Mammary epithelial cell (primary cell): ENCODE measurements at regions of chr22 and their contacts with region 1.

Region 1: GRCh38 chr22:39532215-39533071 is at the start of gene RPS19BP1:
- DNase-seq: peak; percentile 100
- H3K4me3 ChIP-seq: peak within 1 kb of the TSS; percentile 65 to 85 (median 80)
- H3K27ac ChIP-seq: peak within 1 kb of the TSS; percentile 52
- H3K4me1 ChIP-seq: peaks cover 41% of the 10 kb centered on the region
- H3K27me3 ChIP-seq: no peaks in the 10 kb centered on the region
- CTCF ChIP-seq: no peak
- total RNA-seq, gene RPS19BP1: 35.7 to 81.3 TPM

Region 2: DNA sequence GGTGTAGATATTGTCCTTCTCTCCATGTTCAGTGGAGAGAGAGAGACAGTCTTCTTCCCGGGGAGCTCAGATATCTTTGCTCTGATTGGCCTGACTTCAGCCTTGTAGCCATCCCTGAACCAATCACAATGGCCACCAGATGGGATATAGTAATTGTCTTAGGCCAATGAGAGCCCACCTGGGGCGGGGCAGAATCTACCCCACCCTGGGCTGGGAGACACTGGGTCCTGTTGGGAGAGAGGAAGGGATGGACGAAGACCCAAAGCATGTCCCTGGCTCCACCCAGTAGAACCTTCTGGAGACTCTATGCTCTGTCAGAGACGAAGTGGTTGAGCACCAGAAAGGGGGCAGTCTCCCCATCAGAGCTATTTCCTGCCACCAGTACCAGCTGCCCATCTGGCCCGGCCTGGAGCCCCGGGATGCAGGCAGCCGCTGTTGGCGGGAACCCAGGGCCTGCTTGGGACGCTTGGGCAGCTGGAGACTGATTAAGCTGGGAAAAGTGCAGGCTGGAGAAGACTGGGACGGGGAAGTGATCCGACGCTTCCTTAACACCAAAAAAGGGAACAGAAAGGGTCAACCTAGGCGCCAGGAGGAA is 348.4 kb before region 1 on chr22:
- CTCF ChIA-PET with region 1: interaction called, 15 read pairs
- dilution Hi-C with region 1: no loop called
- in situ Hi-C with region 1: no loop called
- intact Hi-C with region 1: no loop called
- DNase-seq: no peak
- H3K4me3 ChIP-seq: no peak overlapping the region
- H3K27ac ChIP-seq: no peak overlapping the region
- H3K4me1 ChIP-seq: peaks cover 9% of the 10 kb centered on the region
- H3K27me3 ChIP-seq: no peaks in the 10 kb centered on the region
- CTCF ChIP-seq: no peak

Region 3: GRCh38 chr22:39414886-39415285 is 117.6 kb before region 1 on chr22:
- CTCF ChIA-PET with region 1: no interaction called
- dilution Hi-C with region 1: no loop called
- in situ Hi-C with region 1: no loop called
- intact Hi-C with region 1: no loop called
- DNase-seq: no peak
- H3K4me3 ChIP-seq: no peak overlapping the region
- H3K27ac ChIP-seq: no peak overlapping the region
- H3K4me1 ChIP-seq: no peaks in the 10 kb centered on the region
- H3K27me3 ChIP-seq: no peaks in the 10 kb centered on the region
- CTCF ChIP-seq: no peak

Region 4: GRCh38 chr22:39808081-39808480 is 275.6 kb after region 1 on chr22:
- CTCF ChIA-PET with region 1: no interaction called
- dilution Hi-C with region 1: no loop called
- in situ Hi-C with region 1: no loop called
- intact Hi-C with region 1: loop called (anchors 1 kb)
- DNase-seq: no peak
- H3K4me3 ChIP-seq: no peak overlapping the region
- H3K27ac ChIP-seq: no peak overlapping the region
- H3K4me1 ChIP-seq: no peaks in the 10 kb centered on the region
- H3K27me3 ChIP-seq: no peaks in the 10 kb centered on the region
- CTCF ChIP-seq: peak; percentile 41 to 51

Region 5: DNA sequence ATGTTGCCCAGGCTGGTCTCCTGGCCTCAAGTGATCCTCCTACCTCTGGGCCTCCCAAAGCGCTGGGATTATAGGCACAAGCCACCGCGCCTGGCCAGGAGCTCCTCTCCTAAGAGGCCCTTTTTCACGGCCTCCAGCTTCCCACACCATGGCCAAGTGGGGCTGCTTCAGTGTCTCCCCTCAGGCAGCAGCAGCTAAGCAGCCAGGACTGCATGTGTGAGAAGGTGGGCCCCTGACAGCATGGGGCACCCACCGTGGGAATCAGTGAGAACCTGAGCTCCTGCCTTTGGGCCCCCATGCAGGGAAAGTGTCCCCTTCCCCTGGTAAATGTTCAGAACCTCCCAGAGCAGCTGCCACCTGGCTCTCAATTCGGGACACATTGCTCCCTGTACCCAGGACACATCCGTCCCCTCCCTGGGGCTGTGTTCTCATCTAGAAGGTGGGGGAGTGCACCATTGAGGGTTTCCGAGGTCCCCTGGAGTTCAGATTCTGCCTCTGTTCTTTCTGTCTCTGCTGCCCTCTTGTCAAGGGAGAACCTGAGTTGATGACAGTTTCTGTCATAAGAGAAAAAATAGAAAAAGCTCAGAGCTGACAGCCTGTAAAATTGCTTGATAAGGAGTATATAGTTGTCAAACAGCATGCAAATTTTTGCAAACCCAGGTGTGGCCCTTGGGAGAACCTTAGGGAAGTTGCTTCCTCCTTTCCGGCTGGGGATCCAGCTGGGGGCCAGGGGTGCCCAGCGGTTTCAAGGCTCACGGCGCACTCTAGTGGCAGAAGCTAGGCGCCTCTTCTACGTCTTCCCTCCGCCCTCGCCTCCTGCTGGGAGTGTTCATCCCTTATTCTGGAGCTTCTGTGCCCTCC is 492.0 kb after region 1 on chr22:
- CTCF ChIA-PET with region 1: no interaction called
- dilution Hi-C with region 1: no loop called
- in situ Hi-C with region 1: no loop called
- intact Hi-C with region 1: loop called (anchors 1 kb)
- DNase-seq: peak; percentile 35
- H3K4me3 ChIP-seq: no peak overlapping the region
- H3K27ac ChIP-seq: no peak overlapping the region
- H3K4me1 ChIP-seq: peaks cover 55% of the 10 kb centered on the region
- H3K27me3 ChIP-seq: no peaks in the 10 kb centered on the region
- CTCF ChIP-seq: peak; percentile 66 to 88

Region 6: GRCh38 chr22:40193429-40194421 is 661.3 kb after region 1 on chr22:
- CTCF ChIA-PET with region 1: no interaction called
- dilution Hi-C with region 1: no loop called
- in situ Hi-C with region 1: loop called in 1 of 2 experiments (anchors 25 kb)
- intact Hi-C with region 1: loop called (anchors 5 kb)
- DNase-seq: no peak
- H3K4me3 ChIP-seq: no peak overlapping the region
- H3K27ac ChIP-seq: no peak overlapping the region
- H3K4me1 ChIP-seq: peaks cover 35% of the 10 kb centered on the region
- H3K27me3 ChIP-seq: no peaks in the 10 kb centered on the region
- CTCF ChIP-seq: peak; percentile 25 to 52